ENCODE measurements at regions of chr19 and their contacts with region 1.

Region 1: GRCh38 chr19:46265217-46265828 is 31.5 kb upstream of the HIF3A start:
- DNase-seq: peak in 1 of 3 donors; percentile 71
- ATAC-seq: peak; percentile 89
- H3K4me3 ChIP-seq: no peak overlapping the region
- H3K4me1 ChIP-seq: no peaks in the 10 kb centered on the region
- CTCF ChIP-seq: peak; percentile 58

Region 2: DNA sequence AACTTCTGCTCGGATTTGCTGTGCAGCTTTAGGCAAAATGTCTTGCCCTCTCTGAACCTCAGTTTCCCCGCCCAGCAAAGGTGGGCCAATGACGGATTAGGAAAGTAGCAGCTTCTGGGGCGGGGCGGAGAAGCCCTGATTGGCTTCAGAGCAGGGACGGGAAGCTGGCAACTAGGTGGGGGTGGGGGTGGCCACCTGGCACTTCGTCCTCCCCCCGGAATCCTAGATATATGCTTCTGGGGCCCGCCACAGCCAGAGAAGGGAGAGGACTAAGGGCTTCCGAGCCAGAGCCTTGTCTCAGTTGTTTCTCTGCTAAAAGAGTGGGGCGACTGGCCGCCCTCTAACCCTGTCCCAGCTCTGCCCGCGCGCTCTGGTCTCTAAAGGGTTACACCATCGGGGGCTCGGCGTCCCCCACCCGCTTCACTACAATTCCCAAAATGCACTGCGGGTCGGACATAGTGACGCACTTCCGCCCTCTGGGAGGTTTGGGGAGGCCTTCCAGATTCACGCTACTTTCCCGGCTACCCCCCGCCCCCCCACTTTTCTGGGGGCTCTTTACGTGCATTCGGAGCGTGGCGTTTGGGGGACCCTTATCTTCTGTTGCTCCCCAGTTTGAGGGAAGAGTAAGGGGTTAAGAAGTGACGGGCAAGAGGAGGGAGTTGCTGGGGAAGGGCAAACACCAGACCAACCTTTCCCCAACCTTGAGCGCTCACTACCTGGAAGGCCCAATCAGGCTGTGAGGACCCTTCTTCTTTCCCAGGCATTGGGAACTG is 378.7 kb before region 1 on chr19:
- intact Hi-C with region 1: no loop called
- DNase-seq: peak; percentile 92 to 93 (median 93)
- ATAC-seq: peak; percentile 68
- H3K4me3 ChIP-seq: peak overlapping the region; percentile 57
- H3K4me1 ChIP-seq: peaks cover 35% of the 10 kb centered on the region
- CTCF ChIP-seq: no peak

Region 3: DNA sequence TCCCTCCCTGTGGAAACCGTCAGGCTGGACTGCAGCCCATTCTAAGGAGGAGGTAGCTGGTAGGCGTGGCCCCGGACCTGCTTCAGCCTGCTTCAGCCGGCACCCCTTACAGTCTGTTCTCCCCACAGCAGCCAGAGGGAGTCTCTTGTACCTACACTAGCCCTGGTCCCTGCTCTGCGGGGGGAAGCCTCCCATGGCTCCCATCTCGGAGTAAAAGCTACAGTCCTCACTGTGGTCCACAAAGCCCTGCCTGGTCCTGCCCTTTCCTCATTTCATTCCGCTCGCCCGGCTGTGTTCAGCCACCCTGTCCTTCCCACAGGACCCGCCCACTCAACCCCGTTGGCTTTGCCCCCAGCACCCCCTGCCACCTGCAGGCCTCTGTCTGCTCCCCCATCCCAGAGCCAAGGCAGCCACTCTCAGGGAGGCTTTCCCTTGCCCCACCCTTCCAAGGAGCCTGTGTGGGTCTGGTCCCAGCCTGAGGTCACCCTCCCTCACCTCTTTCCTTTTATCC is 243.7 kb before region 1 on chr19:
- intact Hi-C with region 1: loop called in 1 of 2 experiments (anchors 5 kb)
- DNase-seq: peak in 2 of 3 donors; percentile 43
- ATAC-seq: peak; percentile 60
- H3K4me3 ChIP-seq: no peak overlapping the region
- H3K4me1 ChIP-seq: no peaks in the 10 kb centered on the region
- CTCF ChIP-seq: no peak

Region 4: GRCh38 chr19:46030812-46031550 is 234.3 kb before region 1 on chr19:
- intact Hi-C with region 1: loop called (anchors 5 to 10 kb)
- DNase-seq: no peak
- ATAC-seq: no peak
- H3K4me3 ChIP-seq: no peak overlapping the region
- H3K4me1 ChIP-seq: no peaks in the 10 kb centered on the region
- CTCF ChIP-seq: no peak

Region 5: DNA sequence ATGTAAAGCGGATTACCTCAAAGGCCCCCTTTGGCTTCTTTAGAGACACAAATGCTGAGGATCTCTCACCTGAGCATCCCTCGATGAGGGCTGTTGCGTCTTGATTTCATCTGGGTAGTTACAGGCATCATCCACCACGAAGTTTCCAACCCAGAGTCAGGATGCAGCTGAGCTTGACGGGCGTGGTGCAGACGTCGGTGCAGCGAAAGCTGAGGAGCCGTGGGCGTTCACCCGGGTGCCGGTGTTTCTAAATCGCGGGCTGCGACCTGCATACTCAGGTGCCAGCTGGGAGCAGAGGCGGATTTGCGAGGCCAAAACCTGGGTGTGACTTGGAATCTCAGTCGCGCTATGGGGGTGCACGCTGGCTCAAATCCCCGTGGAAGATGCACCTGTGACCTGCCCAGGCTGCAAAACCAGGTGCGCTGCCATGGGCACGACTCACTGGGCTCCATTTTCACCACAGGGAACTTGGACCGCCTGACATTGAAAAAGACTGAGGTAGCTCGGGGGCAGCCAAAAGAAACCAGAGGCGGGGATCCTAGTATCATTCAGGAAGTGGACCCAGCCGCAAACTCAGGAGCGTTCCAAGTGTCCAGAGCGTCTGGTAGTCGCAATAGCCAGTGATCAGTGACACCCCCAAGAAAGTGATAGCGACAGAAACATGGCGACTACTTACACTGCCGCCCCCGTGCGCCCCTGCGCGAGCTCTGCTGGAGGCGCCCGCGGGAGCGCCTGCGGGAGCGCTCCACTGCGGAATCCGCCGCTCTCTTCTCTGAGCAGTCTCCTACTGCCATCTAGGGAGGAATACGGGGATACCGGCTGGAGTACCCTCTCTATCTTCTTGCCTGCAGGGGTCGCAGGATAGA is 188.1 kb before region 1 on chr19:
- intact Hi-C with region 1: loop called in 1 of 2 experiments (anchors 5 kb)
- DNase-seq: peak; percentile 37 to 69 (median 48)
- ATAC-seq: peak; percentile 95
- H3K4me3 ChIP-seq: no peak overlapping the region
- H3K4me1 ChIP-seq: peaks cover 8% of the 10 kb centered on the region
- CTCF ChIP-seq: no peak

Region 6: GRCh38 chr19:46221981-46222610 is 43.2 kb before region 1 on chr19:
- intact Hi-C with region 1: no loop called
- DNase-seq: no peak
- ATAC-seq: no peak
- H3K4me3 ChIP-seq: no peak overlapping the region
- H3K4me1 ChIP-seq: no peaks in the 10 kb centered on the region
- CTCF ChIP-seq: no peak

Measured in mucosa of descending colon (tissue), 3 donors.